ENCODE measurements at regions of chr11 and their contacts with region 1.

Region 1: DNA sequence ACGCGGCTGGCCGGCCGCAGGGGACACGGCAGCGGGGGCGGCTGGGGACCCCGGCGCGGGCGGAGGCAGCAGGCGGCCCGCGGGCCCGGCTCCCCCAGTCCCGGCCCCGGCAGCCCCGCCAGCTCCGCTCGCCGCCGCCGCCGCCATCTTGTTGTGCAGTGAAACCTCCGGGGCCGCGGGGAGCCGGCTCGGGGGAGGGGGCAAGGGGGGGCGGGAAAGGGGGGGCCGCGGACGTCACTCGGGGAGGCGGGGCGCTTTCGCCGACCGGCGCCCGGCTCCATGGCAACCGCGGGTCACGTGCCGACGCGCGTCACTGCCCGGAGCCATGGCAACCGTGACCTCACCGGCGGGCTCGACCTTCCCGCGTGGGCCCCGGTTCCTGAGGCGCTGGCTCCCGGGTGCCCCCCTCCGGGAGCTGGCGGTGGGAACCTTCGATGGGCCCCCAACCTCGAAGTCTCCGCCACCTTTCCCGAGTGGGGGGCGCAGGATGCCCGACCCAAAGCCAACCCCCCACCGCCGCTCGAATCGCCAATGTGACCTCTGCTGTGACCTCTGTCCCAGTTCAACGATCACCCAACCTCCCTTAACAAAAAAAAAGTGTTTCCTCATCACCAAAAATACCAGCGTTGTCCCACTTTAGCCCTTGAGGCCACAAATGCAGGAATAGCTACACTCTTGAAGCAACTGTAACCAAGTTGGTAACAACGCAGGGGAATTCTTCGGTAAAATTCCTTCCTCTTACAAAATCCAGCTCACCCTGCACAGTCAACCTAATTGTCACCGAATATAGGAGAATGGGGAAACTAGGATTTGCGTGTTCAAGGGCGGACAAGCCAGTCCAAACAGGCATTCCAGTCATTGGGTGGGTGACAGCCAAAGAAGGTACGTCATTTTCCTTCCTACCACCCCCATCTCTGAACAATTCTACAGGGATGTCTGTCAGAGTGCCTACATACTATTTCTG is at the start of gene SIK3:
- DNase-seq: peak; percentile 96
- ATAC-seq: peak; percentile 74
- H3K4me3 Mint-ChIP-seq: peak within 1 kb of the TSS; percentile 95
- H3K27ac Mint-ChIP-seq: peak within 1 kb of the TSS; percentile 97
- H3K4me1 Mint-ChIP-seq: peaks cover 55% of the 10 kb centered on the region
- H3K27me3 Mint-ChIP-seq: no peaks in the 10 kb centered on the region
- CTCF ChIP-seq: no peak
- total RNA-seq, gene SIK3: 75.0 and 88.4 TPM in 2 replicates

Region 2: GRCh38 chr11:116787786-116788486 is 310.6 kb before region 1 on chr11 and contains the start of gene ZPR1:
- CTCF ChIA-PET with region 1: interaction called, 38 read pairs
- POLR2A ChIA-PET with region 1: interaction called, 4 read pairs
- intact Hi-C with region 1: loop called (anchors 5 kb)
- DNase-seq: peak; percentile 81
- ATAC-seq: peak; percentile 81
- H3K4me3 Mint-ChIP-seq: peak within 1 kb of the TSS; percentile 98
- H3K27ac Mint-ChIP-seq: peak within 1 kb of the TSS; percentile 95
- H3K4me1 Mint-ChIP-seq: peaks cover 33% of the 10 kb centered on the region
- H3K27me3 Mint-ChIP-seq: peaks cover 4% of the 10 kb centered on the region
- CTCF ChIP-seq: no peak
- total RNA-seq, gene ZPR1: 69.0 and 78.7 TPM in 2 replicates

Region 3: DNA sequence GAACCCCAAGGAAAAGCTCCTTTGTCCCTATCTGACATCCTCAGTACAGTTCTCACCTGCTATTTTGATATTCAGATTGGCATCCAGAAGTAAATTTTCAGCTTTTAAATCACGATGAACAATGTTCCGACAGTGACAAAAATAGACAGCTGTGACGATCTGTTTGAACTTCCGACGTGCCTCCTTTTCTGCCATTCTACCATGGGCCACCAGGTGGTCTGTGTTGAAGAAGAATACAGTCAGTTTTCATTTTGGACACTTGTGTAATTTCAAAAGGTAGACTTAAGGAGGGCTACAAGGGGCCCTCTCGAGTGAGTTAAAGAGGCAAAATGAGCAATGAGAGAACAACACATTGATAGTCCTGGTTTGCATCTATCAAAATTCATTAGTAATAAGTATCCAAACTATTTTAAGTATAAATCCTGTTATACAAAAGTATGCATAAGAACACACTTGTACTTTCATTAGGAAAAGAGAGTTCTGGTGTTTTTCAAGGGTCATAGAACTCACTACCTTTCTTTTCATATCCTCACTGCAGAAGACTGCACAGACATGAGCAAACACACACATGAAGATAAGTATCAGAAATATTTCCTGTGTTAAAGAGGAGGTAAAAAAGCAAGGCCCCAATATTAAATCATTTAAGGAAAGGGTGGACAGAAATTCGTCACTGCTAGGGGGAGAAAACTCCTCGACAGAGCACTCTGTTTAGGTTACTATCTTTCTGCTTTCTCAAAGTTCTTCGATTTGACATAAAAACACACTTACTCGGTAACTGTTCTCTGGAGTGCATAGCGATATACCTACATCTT is 171.2 kb before region 1 on chr11:
- CTCF ChIA-PET with region 1: interaction called, 22 read pairs
- POLR2A ChIA-PET with region 1: interaction called, 7 read pairs
- intact Hi-C with region 1: loop called (anchors 1 kb)
- DNase-seq: no peak
- ATAC-seq: peak; percentile 40
- H3K4me3 Mint-ChIP-seq: peak overlapping the region; percentile 50
- H3K27ac Mint-ChIP-seq: peak overlapping the region; percentile 88
- H3K4me1 Mint-ChIP-seq: peaks cover 91% of the 10 kb centered on the region
- H3K27me3 Mint-ChIP-seq: no peaks in the 10 kb centered on the region
- CTCF ChIP-seq: no peak

Region 4: DNA sequence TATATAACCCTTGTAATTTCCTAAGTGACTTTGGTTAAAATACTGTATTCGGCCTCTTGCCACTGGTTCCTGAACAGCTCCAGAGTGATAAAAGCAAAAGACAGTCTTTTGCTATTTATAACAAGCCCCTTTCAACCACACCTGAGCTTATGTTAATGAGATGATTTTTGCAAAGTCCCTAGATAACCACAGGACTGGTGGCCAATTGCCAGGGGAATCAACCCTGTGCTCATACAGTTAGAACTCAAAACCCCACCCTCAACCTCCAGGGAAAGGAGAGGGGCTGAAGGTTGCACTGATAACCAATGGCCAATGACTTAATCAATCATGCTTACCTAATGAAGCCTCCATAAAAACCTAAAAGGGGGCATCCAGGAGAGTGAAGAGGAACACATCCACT is 78.3 kb before region 1 on chr11:
- CTCF ChIA-PET with region 1: interaction called, 3 read pairs
- POLR2A ChIA-PET with region 1: interaction called, 4 read pairs
- intact Hi-C with region 1: loop called (anchors 2 kb)
- DNase-seq: no peak
- ATAC-seq: peak; percentile 86
- H3K4me3 Mint-ChIP-seq: peak overlapping the region; percentile 45
- H3K27ac Mint-ChIP-seq: peak overlapping the region; percentile 62
- H3K4me1 Mint-ChIP-seq: peaks cover 79% of the 10 kb centered on the region
- H3K27me3 Mint-ChIP-seq: no peaks in the 10 kb centered on the region
- CTCF ChIP-seq: no peak

Region 5: DNA sequence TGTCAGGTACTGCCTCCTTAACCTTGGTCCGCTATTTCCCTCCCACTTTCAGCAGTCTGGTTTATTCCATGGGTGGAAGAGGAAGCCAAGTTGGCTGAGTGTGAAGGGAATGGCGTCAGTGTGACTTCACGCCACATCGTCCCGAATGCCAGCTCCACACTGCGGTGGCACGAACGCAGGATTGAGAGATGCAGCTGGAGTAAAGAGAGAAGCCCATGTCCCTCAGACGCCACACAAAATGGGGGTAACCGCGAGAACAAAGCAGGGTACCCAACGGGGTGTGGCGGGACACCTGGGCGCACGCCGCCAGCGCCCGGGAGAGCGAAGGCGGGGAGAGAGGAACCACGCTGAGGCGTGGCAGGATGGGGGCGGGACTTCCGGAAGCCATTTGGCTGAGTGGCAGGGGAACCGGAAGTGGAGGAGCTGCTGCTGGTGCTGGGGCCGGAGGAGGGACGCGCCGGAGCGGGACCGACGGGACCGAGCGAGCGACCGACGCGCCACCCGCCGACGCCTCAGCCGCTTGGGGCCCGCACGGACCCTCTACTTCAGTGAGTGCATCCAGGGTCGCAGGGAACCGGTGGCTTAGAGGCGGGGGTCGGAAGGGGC is 45.4 kb after region 1 on chr11 and contains the start of gene PAFAH1B2:
- CTCF ChIA-PET with region 1: no interaction called
- POLR2A ChIA-PET with region 1: interaction called, 15 read pairs
- intact Hi-C with region 1: loop called (anchors 5 kb)
- DNase-seq: peak; percentile 95
- ATAC-seq: peak; percentile 84
- H3K4me3 Mint-ChIP-seq: peak within 1 kb of the TSS; percentile 95
- H3K27ac Mint-ChIP-seq: peak within 1 kb of the TSS; percentile 95
- H3K4me1 Mint-ChIP-seq: peaks cover 40% of the 10 kb centered on the region
- H3K27me3 Mint-ChIP-seq: peaks cover 5% of the 10 kb centered on the region
- CTCF ChIP-seq: no peak
- total RNA-seq, gene PAFAH1B2: 71.3 and 78.7 TPM in 2 replicates

Region 6: DNA sequence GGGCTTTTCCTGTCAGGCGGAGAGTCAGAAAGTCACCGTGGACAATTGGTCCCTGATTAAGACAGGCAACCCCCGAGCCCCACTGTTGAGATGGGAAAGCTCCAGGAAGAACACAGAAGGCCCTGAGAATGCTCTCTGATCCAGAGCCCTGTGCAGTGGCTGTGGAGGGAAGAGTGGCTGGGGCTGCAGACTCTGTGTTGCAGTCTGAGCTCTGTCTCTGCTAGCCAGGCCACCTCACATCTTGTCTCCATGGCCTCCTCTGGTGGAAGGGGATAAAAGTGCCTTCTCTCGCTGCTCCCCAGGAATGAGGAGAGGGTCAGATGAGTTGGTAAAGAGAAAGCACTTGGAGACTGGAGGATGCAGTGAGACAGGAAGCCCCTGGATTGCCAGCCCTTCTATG is 370.3 kb after region 1 on chr11:
- CTCF ChIA-PET with region 1: no interaction called
- POLR2A ChIA-PET with region 1: no interaction called
- intact Hi-C with region 1: no loop called
- DNase-seq: no peak
- ATAC-seq: no peak
- H3K4me3 Mint-ChIP-seq: no peak overlapping the region
- H3K27ac Mint-ChIP-seq: no peak overlapping the region
- H3K4me1 Mint-ChIP-seq: no peaks in the 10 kb centered on the region
- H3K27me3 Mint-ChIP-seq: peaks cover 5% of the 10 kb centered on the region
- CTCF ChIP-seq: no peak

Region 7: GRCh38 chr11:117870103-117870952 is 771.8 kb after region 1 on chr11:
- CTCF ChIA-PET with region 1: no interaction called
- POLR2A ChIA-PET with region 1: no interaction called
- intact Hi-C with region 1: no loop called
- DNase-seq: no peak
- ATAC-seq: no peak
- H3K4me3 Mint-ChIP-seq: no peak overlapping the region
- H3K27ac Mint-ChIP-seq: no peak overlapping the region
- H3K4me1 Mint-ChIP-seq: peaks cover 11% of the 10 kb centered on the region
- H3K27me3 Mint-ChIP-seq: peaks cover 41% of the 10 kb centered on the region
- CTCF ChIP-seq: no peak

Measured in activated B cell treated with CpG ODN at 0.5 μM for 24 hours (primary cell).